ENCODE measurements at regions of chr1 and their contacts with region 1.

Region 1: GRCh38 chr1:27556781-27557595 is 47.0 kb downstream of the AHDC1 start:
- DNase-seq: peak; percentile 88 to 96 (median 92)
- ATAC-seq: peak; percentile 83 to 85 (median 84)
- H3K4me3 ChIP-seq: peak overlapping the region in 2 of 4 donors; percentile 9 to 30
- H3K27ac ChIP-seq: peak overlapping the region; percentile 28 to 73 (median 62)
- H3K4me1 ChIP-seq: peaks cover 0 to 13% (median 0%) of the 10 kb centered on the region in 3 donors
- H3K27me3 ChIP-seq: no peaks in the 10 kb centered on the region
- CTCF ChIP-seq: peak; percentile 87 to 96 (median 88)

Region 2: GRCh38 chr1:27258598-27258997 is 298.4 kb before region 1 on chr1:
- intact Hi-C with region 1: no loop called
- DNase-seq: no peak
- ATAC-seq: no peak
- H3K4me3 ChIP-seq: no peak overlapping the region
- H3K27ac ChIP-seq: no peak overlapping the region
- H3K4me1 ChIP-seq: no peaks in the 10 kb centered on the region
- H3K27me3 ChIP-seq: no peaks in the 10 kb centered on the region
- CTCF ChIP-seq: no peak

Region 3: DNA sequence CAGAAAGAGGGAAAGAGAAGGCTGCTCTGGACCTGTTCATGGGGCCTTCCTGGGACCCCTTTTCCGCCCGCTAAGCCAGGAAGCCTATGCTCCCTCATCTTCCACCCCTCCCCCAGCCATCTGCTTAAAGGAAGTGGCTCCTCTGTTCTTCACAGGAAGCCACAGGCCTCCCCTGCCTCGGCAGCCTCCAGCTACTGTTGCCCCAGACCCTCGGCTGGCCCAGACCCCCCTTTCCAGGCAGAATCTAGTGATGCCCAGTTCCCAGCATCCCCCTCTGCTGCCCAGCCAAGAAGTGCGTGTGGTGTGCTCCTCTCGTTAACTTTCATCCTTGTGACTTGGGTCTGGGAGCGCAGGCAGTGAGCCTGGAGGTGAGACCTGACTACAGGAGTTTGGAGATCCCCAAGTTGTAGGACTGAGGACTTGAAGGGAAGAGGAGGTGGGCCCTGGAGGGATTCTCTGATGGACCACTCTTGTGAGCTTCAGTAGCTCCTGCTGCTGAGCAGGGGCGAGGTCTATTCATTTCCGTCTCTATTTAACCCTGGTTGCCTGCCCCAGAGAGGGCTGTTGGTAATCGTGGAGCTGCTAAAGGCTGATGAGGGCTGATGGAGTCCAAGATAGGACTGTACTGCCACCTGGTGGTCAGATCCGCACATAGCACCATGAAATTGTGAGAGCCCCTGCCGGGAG is 105.9 kb after region 1 on chr1:
- intact Hi-C with region 1: loop called in 1 of 3 experiments (anchors 10 kb)
- DNase-seq: peak; percentile 59 to 95 (median 84)
- ATAC-seq: peak; percentile 51 to 82 (median 76)
- H3K4me3 ChIP-seq: no peak overlapping the region
- H3K27ac ChIP-seq: no peak overlapping the region
- H3K4me1 ChIP-seq: peaks cover 0 to 3% (median 0%) of the 10 kb centered on the region in 3 donors
- H3K27me3 ChIP-seq: no peaks in the 10 kb centered on the region
- CTCF ChIP-seq: peak; percentile 81 to 91 (median 86)

Region 4: DNA sequence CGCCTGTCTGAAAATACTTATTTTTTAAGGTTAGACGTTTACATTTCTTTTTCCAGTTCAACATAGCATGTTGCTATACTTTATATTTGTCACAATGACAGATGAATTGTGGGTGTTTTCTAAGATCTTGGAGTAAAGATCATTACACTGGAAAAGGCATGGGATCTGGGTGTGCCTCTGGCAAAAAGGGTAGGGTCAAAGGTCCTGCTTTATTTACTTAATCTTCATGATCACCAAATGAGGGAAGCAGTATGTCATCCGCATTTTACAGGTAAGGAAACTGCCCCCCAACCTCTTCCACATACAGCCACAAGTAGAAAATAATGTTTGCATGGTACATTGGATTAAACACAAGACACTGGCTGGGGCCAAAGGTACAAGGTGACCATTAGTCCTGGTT is 365.3 kb after region 1 on chr1:
- intact Hi-C with region 1: no loop called
- DNase-seq: no peak
- ATAC-seq: no peak
- H3K4me3 ChIP-seq: no peak overlapping the region
- H3K27ac ChIP-seq: no peak overlapping the region
- H3K4me1 ChIP-seq: no peaks in the 10 kb centered on the region
- H3K27me3 ChIP-seq: no peaks in the 10 kb centered on the region
- CTCF ChIP-seq: no peak